ENCODE measurements at regions of chr2 and their contacts with region 1.

Region 1: DNA sequence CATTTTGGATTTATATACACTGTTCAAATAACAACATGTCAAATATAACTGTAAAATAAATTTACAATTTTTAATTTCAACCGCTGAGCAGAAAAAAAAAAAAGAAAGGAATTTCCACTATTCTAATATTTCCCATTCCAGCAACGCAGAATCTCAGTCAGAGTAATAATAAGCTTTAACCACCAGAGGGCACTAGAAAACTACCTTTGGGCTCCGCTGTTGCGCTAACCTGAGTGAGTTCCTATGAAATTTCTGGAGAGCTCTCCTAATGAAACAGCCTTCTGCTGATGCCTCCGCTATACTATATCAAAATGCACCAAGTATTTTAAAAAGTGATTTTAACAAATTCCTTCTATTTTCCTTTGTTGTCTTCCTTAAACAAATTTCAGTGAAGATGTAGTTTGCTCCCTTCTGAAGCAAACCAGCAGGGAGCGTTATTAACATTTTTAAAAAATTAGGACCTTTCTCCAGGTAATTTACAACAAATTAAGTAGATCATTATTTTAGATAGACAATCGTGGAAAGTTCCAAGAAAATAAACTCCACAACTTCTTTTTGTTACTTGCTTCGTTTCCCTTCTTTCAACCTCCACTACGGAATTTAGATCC is 23.0 kb downstream of the ERMN start:
- DNase-seq: peak; percentile 40
- CTCF ChIP-seq: peak; percentile 66

Region 2: GRCh38 chr2:156999661-157000060 is 302.9 kb before region 1 on chr2:
- in situ Hi-C with region 1: no loop called
- DNase-seq: no peak
- CTCF ChIP-seq: no peak

Region 3: DNA sequence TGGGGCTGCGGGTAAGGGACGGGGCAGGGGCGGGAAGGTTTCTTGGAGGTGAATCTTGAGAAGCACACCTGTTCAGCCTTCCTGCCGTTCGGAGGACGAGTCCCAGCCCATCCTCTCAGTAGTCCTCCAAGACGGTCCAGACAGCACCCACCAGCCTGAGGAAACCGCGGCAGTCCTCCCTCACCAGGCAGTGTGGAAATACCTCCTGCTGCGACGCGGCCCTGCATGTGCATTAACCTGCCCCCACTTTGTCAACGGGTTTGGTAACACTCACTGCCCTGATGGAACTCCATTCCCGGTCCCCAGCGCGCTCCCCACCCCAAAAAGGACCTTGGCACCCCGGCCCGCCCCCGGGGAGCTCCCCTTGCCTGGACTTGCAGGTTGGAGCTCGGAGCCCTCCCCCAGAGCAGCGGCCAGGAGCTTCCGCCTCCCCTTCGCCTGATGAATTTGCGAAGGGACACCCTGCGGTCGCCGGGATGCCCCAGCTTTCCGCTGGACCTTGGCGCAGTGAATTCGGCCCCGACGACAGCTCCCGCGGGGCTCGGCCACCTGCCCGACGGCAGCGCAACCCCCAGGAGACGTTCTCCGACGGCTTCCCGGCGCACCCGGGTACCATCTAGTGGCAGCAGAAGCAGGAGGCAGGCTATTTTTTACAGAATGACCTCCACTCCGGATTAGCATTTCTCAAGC is 294.5 kb after region 1 on chr2:
- in situ Hi-C with region 1: loop called (anchors 10 kb)
- DNase-seq: peak; percentile 45
- CTCF ChIP-seq: peak; percentile 65

Region 4: GRCh38 chr2:157751462-157752058 is 449.0 kb after region 1 on chr2:
- in situ Hi-C with region 1: loop called (anchors 25 kb)
- DNase-seq: no peak
- CTCF ChIP-seq: peak; percentile 43

Region 5: GRCh38 chr2:158006961-158007719 is 704.5 kb after region 1 on chr2:
- in situ Hi-C with region 1: loop called (anchors 10 kb)
- DNase-seq: no peak
- CTCF ChIP-seq: no peak